ENCODE measurements at regions of chr2 and their contacts with region 1.

Region 1: DNA sequence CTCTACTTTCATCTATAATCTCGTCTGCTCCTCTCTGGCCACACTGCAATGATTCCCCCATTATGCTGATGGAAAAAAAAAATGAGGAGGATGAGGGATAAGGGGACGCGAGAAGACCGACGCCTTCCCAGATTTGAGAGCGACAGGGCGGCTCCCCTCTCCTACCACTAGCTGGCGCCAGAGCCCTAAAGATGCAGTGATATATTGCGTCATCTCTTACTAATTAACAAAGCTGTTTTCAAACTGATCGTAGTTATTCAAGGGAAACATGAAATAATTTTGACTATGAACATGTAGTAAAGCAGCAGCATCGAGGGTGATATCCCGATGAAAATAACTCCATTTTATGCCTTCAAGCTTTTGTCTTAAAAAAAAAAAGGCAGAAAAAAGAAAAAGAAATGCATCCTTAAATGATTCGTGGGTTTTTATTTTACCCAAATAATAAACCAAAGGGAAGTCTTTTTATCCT is 48.0 kb upstream of the HNRNPA3 start:
- DNase-seq: peak; percentile 85
- H3K4me3 Mint-ChIP-seq: no peak overlapping the region
- H3K27ac Mint-ChIP-seq: no peak overlapping the region
- H3K4me1 Mint-ChIP-seq: peaks cover 35% of the 10 kb centered on the region
- H3K27me3 Mint-ChIP-seq: peaks cover 13% of the 10 kb centered on the region

Region 2: DNA sequence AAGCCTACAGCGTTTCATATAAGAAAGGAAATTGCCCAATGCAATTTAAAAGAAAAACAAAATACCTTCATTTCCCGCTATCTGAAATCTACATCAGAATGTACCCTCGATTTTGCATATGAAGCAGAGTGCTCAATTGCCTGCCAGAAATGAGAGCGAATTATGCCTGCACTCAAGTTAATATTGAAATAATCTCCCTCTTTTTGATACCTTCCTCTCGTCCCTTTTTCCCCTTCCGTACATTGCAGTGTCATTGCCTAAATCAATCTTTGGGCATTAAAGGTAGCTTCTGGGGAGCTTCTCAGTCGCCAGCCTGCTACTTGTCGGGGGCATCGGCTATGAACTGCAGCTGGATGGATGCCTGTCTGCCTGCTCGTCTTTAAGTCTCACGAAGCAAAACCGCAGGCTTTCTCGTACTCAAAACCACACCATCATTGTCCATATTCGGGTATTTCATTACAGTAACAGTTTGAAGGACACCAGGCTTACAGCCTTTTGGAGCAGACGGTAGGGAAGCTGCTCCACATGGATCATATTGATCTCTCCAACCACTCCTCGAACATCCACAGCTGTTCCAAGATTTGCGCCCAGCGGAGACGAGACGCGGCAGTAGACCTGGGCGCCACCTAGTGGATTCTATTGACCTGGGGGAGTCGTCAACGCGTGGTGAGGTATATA is 16.0 kb before region 1 on chr2:
- CTCF ChIA-PET with region 1: interaction called, 41 read pairs
- DNase-seq: peak; percentile 82
- H3K4me3 Mint-ChIP-seq: peak overlapping the region; percentile 70
- H3K27ac Mint-ChIP-seq: no peak overlapping the region
- H3K4me1 Mint-ChIP-seq: peaks cover 15% of the 10 kb centered on the region
- H3K27me3 Mint-ChIP-seq: peaks cover 31% of the 10 kb centered on the region

Region 3: DNA sequence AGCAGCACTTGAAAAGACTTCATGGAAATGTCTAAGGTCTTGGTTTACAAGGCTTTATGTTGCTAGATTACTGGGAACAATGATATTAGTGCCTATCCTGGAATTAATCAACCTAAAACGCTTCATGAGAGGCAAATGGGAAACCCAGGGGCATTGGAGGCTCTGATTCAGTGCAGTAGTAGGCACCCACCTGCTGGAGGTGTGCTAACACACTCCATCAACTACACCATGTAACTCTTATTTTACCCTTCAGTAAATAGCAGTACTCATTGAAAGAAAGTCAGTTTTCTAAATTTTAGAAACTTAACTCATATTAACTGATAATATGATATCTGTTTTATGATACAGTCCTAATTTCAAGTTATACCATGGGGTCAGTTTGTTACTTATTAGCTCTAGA is 30.6 kb after region 1 on chr2:
- CTCF ChIA-PET with region 1: interaction called, 22 read pairs
- DNase-seq: no peak
- H3K4me3 Mint-ChIP-seq: no peak overlapping the region
- H3K27ac Mint-ChIP-seq: no peak overlapping the region
- H3K4me1 Mint-ChIP-seq: peaks cover 2% of the 10 kb centered on the region
- H3K27me3 Mint-ChIP-seq: no peaks in the 10 kb centered on the region

Region 4: GRCh38 chr2:177263451-177264208 is 99.0 kb after region 1 on chr2:
- CTCF ChIA-PET with region 1: interaction called, 56 read pairs
- DNase-seq: peak; percentile 96
- H3K4me3 Mint-ChIP-seq: peak overlapping the region; percentile 98
- H3K27ac Mint-ChIP-seq: peak overlapping the region; percentile 100
- H3K4me1 Mint-ChIP-seq: peaks cover 62% of the 10 kb centered on the region
- H3K27me3 Mint-ChIP-seq: peaks cover 3% of the 10 kb centered on the region

Region 5: GRCh38 chr2:177296040-177296439 is 131.4 kb after region 1 on chr2:
- CTCF ChIA-PET with region 1: interaction called, 49 read pairs
- DNase-seq: no peak
- H3K4me3 Mint-ChIP-seq: no peak overlapping the region
- H3K27ac Mint-ChIP-seq: no peak overlapping the region
- H3K4me1 Mint-ChIP-seq: peaks cover 49% of the 10 kb centered on the region
- H3K27me3 Mint-ChIP-seq: no peaks in the 10 kb centered on the region

Region 6: DNA sequence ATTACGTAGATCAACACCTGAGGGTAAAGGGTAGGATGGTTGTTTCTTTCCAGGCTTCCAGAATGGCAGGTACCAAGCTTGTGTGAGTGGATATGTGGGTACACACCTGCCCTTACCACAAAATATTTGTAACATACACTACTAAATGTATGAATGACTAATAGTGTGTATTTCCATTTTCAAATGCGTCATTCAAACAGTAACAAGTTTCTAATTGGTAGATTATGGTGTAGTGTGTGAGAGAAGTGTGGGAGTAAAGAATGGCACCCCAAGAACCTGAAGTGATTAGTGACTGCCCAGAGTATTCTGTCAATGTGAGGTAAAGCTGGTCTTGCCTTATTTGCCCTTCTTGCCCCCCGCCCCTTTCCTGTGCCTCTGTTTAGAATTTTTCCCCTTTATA is 249.1 kb after region 1 on chr2:
- CTCF ChIA-PET with region 1: interaction called, 42 read pairs
- DNase-seq: no peak
- H3K4me3 Mint-ChIP-seq: no peak overlapping the region
- H3K27ac Mint-ChIP-seq: no peak overlapping the region
- H3K4me1 Mint-ChIP-seq: peaks cover 2% of the 10 kb centered on the region
- H3K27me3 Mint-ChIP-seq: no peaks in the 10 kb centered on the region

Region 7: GRCh38 chr2:177604271-177605065 is 439.9 kb after region 1 on chr2:
- CTCF ChIA-PET with region 1: interaction called, 12 read pairs
- DNase-seq: no peak
- H3K4me3 Mint-ChIP-seq: no peak overlapping the region
- H3K27ac Mint-ChIP-seq: no peak overlapping the region
- H3K4me1 Mint-ChIP-seq: peaks cover 1% of the 10 kb centered on the region
- H3K27me3 Mint-ChIP-seq: peaks cover 8% of the 10 kb centered on the region

Region 8: GRCh38 chr2:177666408-177666807 is 501.8 kb after region 1 on chr2:
- CTCF ChIA-PET with region 1: no interaction called
- DNase-seq: no peak
- H3K4me3 Mint-ChIP-seq: no peak overlapping the region
- H3K27ac Mint-ChIP-seq: no peak overlapping the region
- H3K4me1 Mint-ChIP-seq: peaks cover 5% of the 10 kb centered on the region
- H3K27me3 Mint-ChIP-seq: peaks cover 4% of the 10 kb centered on the region

Measured in activated naive CD4-positive, alpha-beta T cell treated with anti-CD3 and anti-CD28 coated beads, Interleukin-2, amount 10 ng/mL, durations not matched to agents 7 days and 5 days (primary cell).